ENCODE measurements at regions of chr9 and their contacts with region 1.

Region 1: GRCh38 chr9:33473643-33474352 is at the start of gene NOL6:
- DNase-seq: peak; percentile 98
- H3K4me3 Mint-ChIP-seq: peak within 1 kb of the TSS; percentile 98
- H3K27ac Mint-ChIP-seq: peak within 1 kb of the TSS; percentile 96
- H3K4me1 Mint-ChIP-seq: peaks cover 20% of the 10 kb centered on the region
- H3K27me3 Mint-ChIP-seq: no peaks in the 10 kb centered on the region
- total RNA-seq, gene NOL6: 87.3 and 90.1 TPM in 2 replicates

Region 2: DNA sequence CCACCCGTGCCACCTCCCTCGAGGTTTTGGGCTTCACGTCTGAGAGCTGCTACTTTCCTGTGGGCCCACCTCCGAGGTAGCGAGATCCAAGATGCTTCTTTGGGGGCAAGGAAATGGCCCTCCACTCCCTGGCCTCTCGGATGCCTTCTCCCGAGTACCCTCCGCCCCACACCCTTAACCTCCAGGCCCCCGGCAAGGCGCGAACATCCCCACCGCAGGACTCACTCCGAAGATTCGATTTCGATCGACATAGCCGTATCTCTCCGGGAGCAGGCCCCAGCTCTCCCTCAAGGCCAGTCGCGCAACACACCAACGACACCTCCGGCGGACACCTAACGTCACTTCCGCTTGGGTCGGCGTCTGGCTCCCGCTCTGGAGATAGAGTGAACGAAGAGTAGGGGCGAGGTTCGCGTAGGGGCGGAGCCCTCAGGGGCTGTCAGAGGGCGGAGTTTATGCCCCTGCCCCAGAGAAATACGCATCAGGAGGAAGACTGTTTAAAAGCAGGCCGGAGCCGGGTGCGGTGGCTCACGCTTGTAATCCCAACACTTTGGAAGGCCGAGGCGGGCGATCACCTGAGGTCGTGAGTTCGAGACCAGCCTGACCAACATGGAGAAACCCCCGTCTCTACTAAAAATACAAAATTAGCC is 397.3 kb before region 1 on chr9 and contains the start of gene SMU1:
- intact Hi-C with region 1: loop called (anchors 1 kb)
- DNase-seq: peak; percentile 96
- H3K4me3 Mint-ChIP-seq: peak within 1 kb of the TSS; percentile 99
- H3K27ac Mint-ChIP-seq: peak within 1 kb of the TSS; percentile 96
- H3K4me1 Mint-ChIP-seq: peaks cover 37% of the 10 kb centered on the region
- H3K27me3 Mint-ChIP-seq: peaks cover 2% of the 10 kb centered on the region
- total RNA-seq, gene SMU1: 28.8 TPM in 2 replicates

Region 3: DNA sequence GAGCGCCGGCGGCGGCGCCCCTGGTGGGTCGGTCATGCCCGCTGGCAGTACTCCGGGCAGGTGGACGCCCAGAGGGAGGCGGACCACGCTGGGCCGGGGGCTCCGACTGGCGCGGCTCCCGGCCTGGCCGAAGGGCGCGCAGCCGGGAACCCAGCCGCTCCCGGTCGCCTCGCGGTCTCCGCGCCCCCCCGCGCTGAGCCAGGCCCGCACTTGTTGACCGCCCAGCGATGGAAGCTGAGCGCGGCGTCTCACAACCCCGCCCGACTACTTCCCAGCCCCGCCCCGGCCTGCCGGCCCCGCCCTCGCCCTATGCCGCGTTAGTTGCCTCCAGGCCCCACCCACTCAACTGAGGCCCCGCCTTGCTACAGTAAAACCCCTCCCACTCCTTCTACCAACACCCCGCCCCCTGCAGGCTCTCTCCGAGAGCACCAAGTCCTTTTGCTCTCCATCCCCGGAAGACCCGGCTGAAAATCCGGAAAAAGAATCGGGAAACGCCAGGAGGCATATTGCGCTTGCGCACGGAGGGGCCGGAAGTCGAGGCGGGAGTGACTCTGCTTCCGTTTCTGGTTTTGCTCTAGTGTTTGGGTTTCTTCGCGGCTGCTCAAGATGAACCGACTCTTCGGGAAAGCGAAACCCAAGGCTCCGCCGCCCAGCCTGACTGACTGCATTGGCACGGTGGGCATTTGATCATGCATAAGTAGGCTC is 209.2 kb before region 1 on chr9 and contains the starts of genes BAG1 and CHMP5:
- intact Hi-C with region 1: loop called (anchors 1 kb)
- DNase-seq: peak; percentile 99
- H3K4me3 Mint-ChIP-seq: peak within 1 kb of the TSS; percentile 96
- H3K27ac Mint-ChIP-seq: peak within 1 kb of the TSS; percentile 94
- H3K4me1 Mint-ChIP-seq: peaks cover 58% of the 10 kb centered on the region
- H3K27me3 Mint-ChIP-seq: no peaks in the 10 kb centered on the region
- total RNA-seq, gene BAG1: 75.0 and 78.2 TPM in 2 replicates
- total RNA-seq, gene CHMP5: 70.7 and 76.7 TPM in 2 replicates

Region 4: GRCh38 chr9:33415501-33416038 is 58.2 kb before region 1 on chr9:
- intact Hi-C with region 1: loop called (anchors 2 kb)
- DNase-seq: peak; percentile 91
- H3K4me3 Mint-ChIP-seq: peak overlapping the region; percentile 76
- H3K27ac Mint-ChIP-seq: peak overlapping the region; percentile 95
- H3K4me1 Mint-ChIP-seq: peaks cover 53% of the 10 kb centered on the region
- H3K27me3 Mint-ChIP-seq: peaks cover under 1% of the 10 kb centered on the region

Region 5: GRCh38 chr9:33524306-33524947 is 50.6 kb after region 1 on chr9:
- intact Hi-C with region 1: loop called (anchors 2 kb)
- DNase-seq: no peak
- H3K4me3 Mint-ChIP-seq: peak overlapping the region; percentile 90
- H3K27ac Mint-ChIP-seq: peak overlapping the region; percentile 84
- H3K4me1 Mint-ChIP-seq: peaks cover 13% of the 10 kb centered on the region
- H3K27me3 Mint-ChIP-seq: peaks cover 63% of the 10 kb centered on the region

Region 6: DNA sequence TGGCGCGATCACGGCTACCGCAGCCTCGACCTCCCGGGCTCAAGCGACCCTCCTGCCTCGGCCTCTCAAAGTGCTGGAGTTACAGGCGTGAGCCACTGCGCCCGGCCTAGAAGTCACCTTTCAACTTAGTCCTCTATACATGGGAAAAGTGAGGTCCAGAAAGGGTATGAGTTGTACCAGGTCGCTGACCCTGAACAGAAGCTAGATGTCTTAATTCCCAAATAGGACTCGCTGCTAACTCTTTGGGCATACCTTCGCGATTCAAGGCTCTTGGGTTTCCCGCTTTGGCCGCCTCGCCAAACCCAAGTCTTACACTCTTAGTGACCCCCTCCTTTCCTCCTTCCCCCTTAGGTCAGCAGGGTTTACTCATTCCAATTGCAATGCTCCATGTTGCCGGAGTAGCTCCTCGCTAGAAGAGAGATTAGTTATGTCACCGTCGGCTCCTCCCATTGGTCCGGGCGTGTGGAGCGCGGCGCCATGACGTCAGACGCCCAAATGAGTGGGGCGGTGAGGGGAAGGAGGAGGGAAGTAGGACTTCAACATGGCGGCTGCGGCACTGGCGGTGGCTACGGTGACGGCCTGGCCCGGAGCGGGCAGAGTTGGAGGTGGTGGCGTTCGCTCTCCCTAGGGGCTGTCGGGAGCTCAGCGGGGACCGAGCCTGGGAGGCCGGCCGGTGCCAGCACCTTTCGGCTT is 704.9 kb after region 1 on chr9 and contains the start of gene UBAP1:
- intact Hi-C with region 1: loop called (anchors 1 kb)
- DNase-seq: peak; percentile 95
- H3K4me3 Mint-ChIP-seq: peak within 1 kb of the TSS; percentile 92
- H3K27ac Mint-ChIP-seq: peak within 1 kb of the TSS; percentile 94
- H3K4me1 Mint-ChIP-seq: peaks cover 5% of the 10 kb centered on the region
- H3K27me3 Mint-ChIP-seq: no peaks in the 10 kb centered on the region
- total RNA-seq, gene UBAP1: 30.0 and 33.4 TPM in 2 replicates

Region 7: DNA sequence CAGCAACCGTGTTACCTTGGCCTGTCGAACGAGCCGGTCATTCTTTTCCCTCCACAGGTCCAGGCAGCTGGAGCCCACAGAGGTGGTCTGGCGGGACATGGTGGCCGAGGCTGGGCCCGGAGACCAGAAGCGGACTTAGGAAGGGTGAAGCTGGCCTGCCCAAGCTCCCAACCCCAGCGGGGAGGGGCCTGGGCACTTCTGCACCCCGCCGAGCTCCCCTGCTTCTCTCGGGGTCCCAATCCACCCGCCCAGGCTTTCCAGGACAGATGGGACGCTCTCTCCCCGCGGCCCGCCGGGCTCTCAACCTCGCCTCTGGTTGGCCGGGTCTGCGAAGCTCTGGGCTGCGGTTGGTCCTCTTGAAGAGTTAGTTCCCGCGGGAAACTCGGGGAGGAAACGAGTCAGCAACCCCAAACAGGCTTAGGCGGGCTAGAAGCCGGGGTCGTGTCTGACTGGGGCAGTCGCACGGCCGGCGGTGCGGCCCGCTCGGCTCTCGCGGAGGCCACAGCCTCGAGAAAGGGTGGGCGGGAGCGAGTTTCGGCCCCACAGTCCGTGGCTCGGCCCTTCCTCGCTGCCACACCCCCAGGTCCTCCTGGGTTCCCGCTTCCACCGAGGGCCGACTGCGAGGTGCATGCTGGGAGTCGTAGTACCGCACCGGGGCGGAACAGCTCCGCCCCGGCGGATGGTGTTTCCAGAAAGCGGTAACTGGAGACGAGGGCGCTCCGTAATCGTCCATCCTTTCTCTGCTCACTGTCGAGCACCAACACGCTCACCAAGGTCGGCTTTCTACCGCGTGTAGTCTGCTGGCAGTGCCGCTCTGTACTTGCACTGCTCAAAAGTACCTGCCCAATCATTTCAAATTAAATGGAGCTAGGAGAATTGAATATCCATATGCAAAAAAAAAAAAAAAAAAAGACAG is 1605.9 kb after region 1 on chr9 and contains the start of gene FANCG:
- intact Hi-C with region 1: loop called (anchors 5 kb)
- DNase-seq: peak; percentile 86
- H3K4me3 Mint-ChIP-seq: peak within 1 kb of the TSS; percentile 96
- H3K27ac Mint-ChIP-seq: peak within 1 kb of the TSS; percentile 98
- H3K4me1 Mint-ChIP-seq: peaks cover 32% of the 10 kb centered on the region
- H3K27me3 Mint-ChIP-seq: no peaks in the 10 kb centered on the region
- total RNA-seq, gene FANCG: 102 and 104 TPM in 2 replicates

Measured in activated T-helper 1 cell treated with anti-CD3 and anti-CD28 coated beads, Interleukin-12 subunit alpha, Interleukin-12 subunit beta, Interleukin-2, Interleukin-4 antibody, amounts not matched to agents 30 ng/mL and 10 ng/mL and 1 ng/mL, durations not matched to agents 14 hours and 24 hours and 36 hours (primary cell).